Naive thymus-derived CD4-positive, alpha-beta T cell (primary cell): ENCODE measurements at regions of chr16 and their contacts with region 1.

Region 1: GRCh38 chr16:12067714-12068401 is 91.3 kb downstream of the SNX29 start:
- DNase-seq: peak; percentile 17 to 76 (median 68)
- ATAC-seq: peak; percentile 89
- H3K4me3 ChIP-seq: no peak overlapping the region
- H3K4me3 Mint-ChIP-seq: no peak overlapping the region
- H3K27ac ChIP-seq: no peak overlapping the region
- H3K27ac Mint-ChIP-seq: peak overlapping the region in 3 of 9 donors; percentile 51 to 64 (median 52)
- H3K4me1 ChIP-seq: no peaks in the 10 kb centered on the region
- H3K4me1 Mint-ChIP-seq: peaks cover 0 to 6% (median 5%) of the 10 kb centered on the region in 7 donors
- H3K27me3 ChIP-seq: no peaks in the 10 kb centered on the region
- H3K27me3 Mint-ChIP-seq: no peaks in the 10 kb centered on the region

Region 2: DNA sequence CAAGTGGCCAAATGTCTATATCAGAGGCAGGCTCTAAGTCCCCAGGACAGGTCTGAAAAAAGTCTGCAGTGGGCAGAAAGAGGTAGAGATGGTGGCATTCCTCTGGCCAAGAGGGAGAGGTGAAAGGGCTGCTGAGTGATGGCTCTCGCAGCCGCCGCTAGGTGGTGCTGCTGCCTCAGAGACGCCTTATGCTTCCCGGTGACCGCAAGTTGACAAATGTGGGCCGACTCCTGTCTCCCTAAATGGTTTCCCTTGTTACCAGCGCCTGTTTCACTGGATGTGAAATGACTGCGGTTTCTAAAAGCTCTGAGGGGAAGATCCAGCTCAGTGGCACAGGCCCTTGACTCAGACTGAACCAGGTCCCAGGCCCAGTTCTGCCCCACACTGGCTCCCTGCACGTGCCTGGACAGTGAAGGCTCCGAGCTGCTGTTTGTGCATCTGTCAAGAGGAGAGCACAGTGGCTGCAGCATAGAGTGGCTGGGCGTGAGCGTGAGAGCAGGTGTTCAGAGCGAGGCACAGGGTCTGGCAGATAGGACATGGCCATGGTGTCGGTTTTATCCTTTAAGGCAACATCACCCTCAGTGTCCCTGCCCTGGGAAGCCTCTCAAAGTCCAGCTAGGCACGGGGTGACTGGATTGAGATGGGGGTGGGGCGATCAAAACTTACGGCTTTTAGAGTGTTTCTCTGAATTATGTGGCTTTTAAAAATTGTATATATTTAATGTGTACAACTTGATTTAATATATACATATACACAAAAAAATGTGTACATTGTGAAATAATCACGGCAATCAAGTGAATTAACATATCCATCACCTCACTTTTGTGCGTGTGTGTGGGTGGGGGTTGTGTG is 1103.6 kb before region 1 on chr16:
- CTCF ChIA-PET with region 1: interaction called, 4 read pairs
- POLR2A ChIA-PET with region 1: no interaction called
- intact Hi-C with region 1: loop called in 1 of 2 experiments (anchors 2 kb)
- DNase-seq: peak; percentile 55 to 84 (median 69)
- ATAC-seq: peak; percentile 81
- H3K4me3 ChIP-seq: peak overlapping the region; percentile 3
- H3K4me3 Mint-ChIP-seq: peak overlapping the region in 6 of 10 donors; percentile 4 to 83 (median 52)
- H3K27ac ChIP-seq: no peak overlapping the region
- H3K27ac Mint-ChIP-seq: peak overlapping the region in 6 of 9 donors; percentile 47 to 91 (median 72)
- H3K4me1 ChIP-seq: peaks cover 11 to 18% of the 10 kb centered on the region in 2 donors
- H3K4me1 Mint-ChIP-seq: peaks cover 15 to 62% (median 28%) of the 10 kb centered on the region in 7 donors
- H3K27me3 ChIP-seq: no peaks in the 10 kb centered on the region
- H3K27me3 Mint-ChIP-seq: no peaks in the 10 kb centered on the region

Region 3: GRCh38 chr16:11535471-11535870 is 532.4 kb before region 1 on chr16:
- CTCF ChIA-PET with region 1: interaction called, 6 read pairs
- POLR2A ChIA-PET with region 1: interaction called, 3 read pairs
- intact Hi-C with region 1: loop called in 1 of 2 experiments (anchors 1 kb)
- DNase-seq: no peak
- ATAC-seq: no peak
- H3K4me3 ChIP-seq: no peak overlapping the region
- H3K4me3 Mint-ChIP-seq: no peak overlapping the region
- H3K27ac ChIP-seq: no peak overlapping the region
- H3K27ac Mint-ChIP-seq: peak overlapping the region in 1 of 9 donors; percentile 26
- H3K4me1 ChIP-seq: peaks cover 4 to 10% of the 10 kb centered on the region in 2 donors
- H3K4me1 Mint-ChIP-seq: peaks cover 8 to 23% (median 19%) of the 10 kb centered on the region in 7 donors
- H3K27me3 ChIP-seq: no peaks in the 10 kb centered on the region
- H3K27me3 Mint-ChIP-seq: peaks cover 0 to 4% (median 0%) of the 10 kb centered on the region in 5 donors

Region 4: DNA sequence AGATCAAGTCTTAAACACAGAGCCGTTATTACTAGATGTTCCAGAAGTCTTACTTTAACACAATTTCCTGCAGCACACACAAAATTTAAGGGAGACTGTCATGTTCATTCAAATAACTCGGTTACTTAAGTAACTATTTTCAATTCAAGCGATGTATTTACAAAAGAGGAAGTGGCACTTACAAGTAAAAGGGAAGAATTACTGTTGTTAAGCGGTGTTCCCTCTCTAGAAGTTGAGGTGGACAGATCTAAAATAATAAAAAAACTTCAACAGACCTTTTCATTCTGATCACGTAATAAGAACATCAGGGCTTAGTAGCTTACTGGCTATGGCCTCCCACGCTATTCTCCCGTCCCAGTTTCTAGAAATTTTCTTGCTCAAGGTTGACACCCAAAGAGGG is 299.0 kb before region 1 on chr16:
- CTCF ChIA-PET with region 1: no interaction called
- POLR2A ChIA-PET with region 1: no interaction called
- intact Hi-C with region 1: loop called in 1 of 2 experiments (anchors 5 kb)
- DNase-seq: no peak
- ATAC-seq: no peak
- H3K4me3 ChIP-seq: no peak overlapping the region
- H3K4me3 Mint-ChIP-seq: peak overlapping the region in 9 of 10 donors; percentile 6 to 43 (median 36)
- H3K27ac ChIP-seq: peak overlapping the region; percentile 22
- H3K27ac Mint-ChIP-seq: peak overlapping the region; percentile 15 to 81 (median 70)
- H3K4me1 ChIP-seq: peaks cover 0 to 10% of the 10 kb centered on the region in 2 donors
- H3K4me1 Mint-ChIP-seq: peaks cover 8 to 23% (median 12%) of the 10 kb centered on the region in 7 donors
- H3K27me3 ChIP-seq: no peaks in the 10 kb centered on the region
- H3K27me3 Mint-ChIP-seq: no peaks in the 10 kb centered on the region

Region 5: GRCh38 chr16:11949527-11949926 is 118.3 kb before region 1 on chr16:
- CTCF ChIA-PET with region 1: interaction called, 10 read pairs
- POLR2A ChIA-PET with region 1: no interaction called
- intact Hi-C with region 1: loop called in 1 of 2 experiments (anchors 1 kb)
- DNase-seq: peak in 3 of 9 donors; percentile 25 to 31 (median 25)
- ATAC-seq: peak; percentile 59
- H3K4me3 ChIP-seq: no peak overlapping the region
- H3K4me3 Mint-ChIP-seq: no peak overlapping the region
- H3K27ac ChIP-seq: no peak overlapping the region
- H3K27ac Mint-ChIP-seq: no peak overlapping the region
- H3K4me1 ChIP-seq: no peaks in the 10 kb centered on the region
- H3K4me1 Mint-ChIP-seq: peaks cover 0 to 6% (median 0%) of the 10 kb centered on the region in 7 donors
- H3K27me3 ChIP-seq: no peaks in the 10 kb centered on the region
- H3K27me3 Mint-ChIP-seq: no peaks in the 10 kb centered on the region

Region 6: DNA sequence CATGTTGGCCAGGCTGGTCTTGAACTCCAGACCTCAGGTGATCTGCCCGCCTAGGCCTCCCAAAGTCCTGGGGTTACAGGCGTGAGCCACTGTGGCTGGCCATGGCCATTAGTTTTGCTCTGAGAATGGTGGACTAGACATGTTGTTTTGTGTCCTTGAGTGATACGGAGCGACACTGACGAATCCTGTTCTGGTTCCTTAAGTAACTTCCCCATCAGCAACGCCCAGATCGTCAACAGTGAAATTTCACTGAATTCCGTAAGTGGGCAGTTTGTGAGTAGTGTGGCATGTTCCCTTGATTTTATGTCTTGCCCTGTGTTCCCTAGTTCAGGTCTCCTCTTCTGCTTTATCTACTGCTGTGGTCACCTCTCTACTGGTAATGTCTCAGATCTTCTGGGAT is 23.9 kb before region 1 on chr16:
- CTCF ChIA-PET with region 1: no interaction called
- POLR2A ChIA-PET with region 1: no interaction called
- intact Hi-C with region 1: no loop called
- DNase-seq: no peak
- ATAC-seq: peak; percentile 36
- H3K4me3 ChIP-seq: no peak overlapping the region
- H3K4me3 Mint-ChIP-seq: no peak overlapping the region
- H3K27ac ChIP-seq: no peak overlapping the region
- H3K27ac Mint-ChIP-seq: peak overlapping the region in 1 of 9 donors; percentile 60
- H3K4me1 ChIP-seq: no peaks in the 10 kb centered on the region
- H3K4me1 Mint-ChIP-seq: no peaks in the 10 kb centered on the region
- H3K27me3 ChIP-seq: no peaks in the 10 kb centered on the region
- H3K27me3 Mint-ChIP-seq: no peaks in the 10 kb centered on the region

Region 7: DNA sequence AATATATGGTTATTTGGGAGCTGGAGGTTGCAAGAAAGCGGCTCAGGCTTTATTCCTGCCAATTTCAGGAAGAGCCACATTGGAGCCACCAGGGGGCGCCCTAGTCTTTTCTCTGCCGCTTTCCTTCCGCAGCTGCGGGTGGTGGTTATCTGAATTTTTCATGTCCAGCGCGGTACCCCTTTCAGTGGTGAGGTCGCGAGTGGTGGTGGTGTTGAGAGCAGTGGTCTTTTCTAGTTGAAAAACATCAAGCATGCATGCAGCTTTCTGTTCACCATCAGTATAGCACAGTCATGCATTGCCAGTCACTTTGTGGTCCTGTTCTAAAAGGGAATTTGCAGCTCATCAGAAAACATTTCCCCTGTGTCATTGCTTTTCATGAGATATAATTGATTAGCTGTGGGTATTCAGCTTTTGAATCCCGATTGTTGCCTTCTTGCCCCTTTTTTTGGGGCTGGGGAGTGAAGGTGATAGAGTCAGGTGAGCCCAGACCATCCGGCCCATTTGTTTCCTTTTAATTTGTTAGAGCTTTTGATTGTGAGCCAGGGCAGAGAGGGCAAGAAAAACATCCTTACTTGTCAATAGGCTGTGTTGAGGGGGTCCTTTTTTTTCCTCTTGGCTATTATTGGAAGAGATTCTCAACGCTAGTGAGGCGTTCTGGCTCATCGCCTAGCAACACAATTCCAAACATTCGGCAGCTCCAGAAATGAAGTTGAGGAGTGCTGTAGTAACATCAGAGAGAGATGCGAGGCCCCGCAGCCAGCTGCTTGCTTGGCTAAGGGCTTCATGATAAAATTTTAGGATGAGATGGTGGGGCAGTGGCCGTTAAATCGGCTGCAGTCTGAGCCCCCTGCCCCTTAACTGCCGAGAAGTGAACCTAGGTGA is 27.7 kb after region 1 on chr16:
- CTCF ChIA-PET with region 1: interaction called, 15 read pairs
- POLR2A ChIA-PET with region 1: no interaction called
- intact Hi-C with region 1: no loop called
- DNase-seq: peak; percentile 27 to 70 (median 57)
- ATAC-seq: peak; percentile 76
- H3K4me3 ChIP-seq: peak overlapping the region; percentile 31
- H3K4me3 Mint-ChIP-seq: peak overlapping the region; percentile 70 to 86 (median 82)
- H3K27ac ChIP-seq: no peak overlapping the region
- H3K27ac Mint-ChIP-seq: peak overlapping the region in 7 of 9 donors; percentile 25 to 81 (median 63)
- H3K4me1 ChIP-seq: peaks cover 0 to 2% of the 10 kb centered on the region in 2 donors
- H3K4me1 Mint-ChIP-seq: peaks cover 7 to 52% (median 38%) of the 10 kb centered on the region in 7 donors
- H3K27me3 ChIP-seq: no peaks in the 10 kb centered on the region
- H3K27me3 Mint-ChIP-seq: no peaks in the 10 kb centered on the region